ENCODE measurements at regions of chr15 and their contacts with region 1.

Region 1: GRCh38 chr15:57306161-57306943 is 70.0 kb upstream of the CGNL1 start:
- DNase-seq: peak; percentile 83 to 89 (median 86)
- ATAC-seq: peak; percentile 96
- H3K4me3 ChIP-seq: no peak overlapping the region
- H3K27ac ChIP-seq: peak overlapping the region; percentile 60; the same call in 2 of the 3 replicates
- H3K4me1 ChIP-seq: peaks cover 9 to 21% of the 10 kb centered on the region in 2 experiments
- H3K27me3 ChIP-seq: no peaks in the 10 kb centered on the region
- CTCF ChIP-seq: peak; percentile 78 to 89 (median 86)
- EP300 ChIP-seq: no peak
- POLR2A ChIP-seq: no peak
- RAD21 ChIP-seq: peak; percentile 82 to 89

Region 2: GRCh38 chr15:56491110-56491722 is 815.1 kb before region 1 on chr15:
- CTCF ChIA-PET with region 1: interaction called, 5 read pairs
- POLR2A ChIA-PET with region 1: no interaction called
- in situ Hi-C with region 1: loop called (anchors 25 kb)
- intact Hi-C with region 1: loop called (anchors 2 kb)
- DNase-seq: peak; percentile 52 to 74 (median 65)
- ATAC-seq: peak; percentile 95
- H3K4me3 ChIP-seq: no peak overlapping the region
- H3K27ac ChIP-seq: no peak overlapping the region
- H3K4me1 ChIP-seq: no peaks in the 10 kb centered on the region; a peak in 1 of 5 replicates
- H3K27me3 ChIP-seq: no peaks in the 10 kb centered on the region
- CTCF ChIP-seq: peak; percentile 81 to 90 (median 89)
- EP300 ChIP-seq: no peak
- POLR2A ChIP-seq: no peak
- RAD21 ChIP-seq: peak; percentile 73 to 87

Region 3: DNA sequence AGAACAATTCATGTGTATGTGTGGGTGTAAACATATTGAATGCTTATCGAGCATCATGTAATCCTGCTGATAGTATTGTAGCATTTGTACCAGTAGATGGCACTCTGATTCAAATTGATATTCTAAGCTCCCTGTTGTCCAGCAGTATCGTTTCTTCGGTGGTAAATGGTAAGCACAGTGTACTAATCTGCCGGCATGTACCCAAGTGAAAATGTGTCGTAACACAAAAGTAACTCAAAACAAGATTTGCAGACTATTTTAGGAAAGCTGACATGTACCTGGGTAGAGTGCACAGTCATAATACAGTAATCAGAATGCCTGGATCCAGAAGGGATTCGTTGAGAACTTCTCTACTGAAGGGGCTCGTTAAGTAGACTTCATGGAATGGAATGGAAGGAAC is 809.7 kb before region 1 on chr15:
- CTCF ChIA-PET with region 1: interaction called, 5 read pairs
- POLR2A ChIA-PET with region 1: no interaction called
- in situ Hi-C with region 1: loop called (anchors 25 kb)
- intact Hi-C with region 1: loop called (anchors 2 kb)
- DNase-seq: peak; percentile 46 to 69 (median 60)
- ATAC-seq: peak; percentile 96
- H3K4me3 ChIP-seq: no peak overlapping the region
- H3K27ac ChIP-seq: no peak overlapping the region
- H3K4me1 ChIP-seq: no peaks in the 10 kb centered on the region; a peak in 1 of 5 replicates
- H3K27me3 ChIP-seq: no peaks in the 10 kb centered on the region
- CTCF ChIP-seq: peak; percentile 51 to 80 (median 59); a peak in 5 of 6 replicates
- EP300 ChIP-seq: no peak
- POLR2A ChIP-seq: no peak
- RAD21 ChIP-seq: peak; percentile 82 to 94

Region 4: GRCh38 chr15:56918046-56918938 is 388.1 kb before region 1 on chr15 and contains the start of gene TCF12:
- CTCF ChIA-PET with region 1: no interaction called
- POLR2A ChIA-PET with region 1: no interaction called
- in situ Hi-C with region 1: loop called (anchors 10 kb)
- intact Hi-C with region 1: loop called (anchors 1 kb)
- DNase-seq: peak; percentile 93 to 96 (median 94)
- ATAC-seq: peak; percentile 92
- H3K4me3 ChIP-seq: peak within 1 kb of the TSS; percentile 88
- H3K27ac ChIP-seq: peak within 1 kb of the TSS; percentile 92
- H3K4me1 ChIP-seq: peaks cover 8 to 20% of the 10 kb centered on the region in 2 experiments; a peak in 4 of 5 replicates
- H3K27me3 ChIP-seq: no peaks in the 10 kb centered on the region
- CTCF ChIP-seq: peak; percentile 43 to 65 (median 51)
- EP300 ChIP-seq: peak; percentile 49; the same call in 1 of the 2 replicates
- POLR2A ChIP-seq: peak; percentile 82
- RAD21 ChIP-seq: peak; percentile 55 to 66
- polyA plus RNA-seq, gene TCF12: 10.5 to 12.9 TPM

Region 5: GRCh38 chr15:57017024-57017423 is 289.3 kb before region 1 on chr15:
- CTCF ChIA-PET with region 1: no interaction called
- POLR2A ChIA-PET with region 1: no interaction called
- in situ Hi-C with region 1: no loop called
- intact Hi-C with region 1: loop called (anchors 5 kb)
- DNase-seq: peak in 1 of 4 experiments; percentile 16
- ATAC-seq: peak; percentile 56; the same call in 1 of the 3 replicates
- H3K4me3 ChIP-seq: no peak overlapping the region
- H3K27ac ChIP-seq: no peak overlapping the region
- H3K4me1 ChIP-seq: peaks cover 0 to 3% of the 10 kb centered on the region in 2 experiments; a peak in 2 of 5 replicates
- H3K27me3 ChIP-seq: no peaks in the 10 kb centered on the region
- CTCF ChIP-seq: peak in 1 of 3 experiments; percentile 48; a peak in 2 of 6 replicates
- EP300 ChIP-seq: no peak
- POLR2A ChIP-seq: no peak
- RAD21 ChIP-seq: peak; percentile 28 to 45

Region 6: DNA sequence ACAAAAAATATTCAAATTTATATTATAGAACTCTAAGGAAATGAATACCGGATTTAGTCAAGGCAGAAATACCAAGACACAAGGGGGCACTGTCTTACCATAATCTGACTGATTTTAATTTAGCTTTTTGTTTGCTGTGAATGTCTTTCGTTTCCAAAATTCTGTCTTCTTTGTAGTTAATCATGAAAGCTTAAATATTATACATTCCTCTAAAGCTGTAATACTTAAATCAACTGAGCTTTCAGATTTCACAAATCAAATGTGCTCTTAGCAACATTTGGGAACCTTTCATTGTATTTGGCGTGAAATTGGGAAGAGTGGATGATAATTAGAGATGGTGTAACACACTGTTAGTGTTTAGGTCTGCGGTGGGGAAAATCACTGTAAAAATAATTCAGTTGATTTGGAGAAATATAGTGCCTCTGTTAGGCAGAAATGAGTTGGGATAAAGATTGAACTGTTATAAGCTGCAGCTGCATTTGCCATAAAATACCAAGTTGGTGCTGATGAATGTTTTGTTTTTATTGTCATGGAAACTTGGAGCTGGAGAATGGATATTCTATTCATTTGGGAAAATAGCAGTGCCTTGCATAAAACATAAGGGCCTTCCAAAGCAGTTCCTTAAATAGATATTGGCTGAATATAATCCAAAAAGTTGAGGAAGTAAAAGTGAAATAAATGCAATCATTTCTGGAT is 159.7 kb before region 1 on chr15:
- CTCF ChIA-PET with region 1: no interaction called
- POLR2A ChIA-PET with region 1: no interaction called
- in situ Hi-C with region 1: no loop called
- intact Hi-C with region 1: loop called (anchors 2 kb)
- DNase-seq: peak; percentile 10 to 53 (median 16)
- ATAC-seq: 0 out of 3 replicates have a peak, but pooled peaks have one; percentile 45
- H3K4me3 ChIP-seq: no peak overlapping the region
- H3K27ac ChIP-seq: no peak overlapping the region
- H3K4me1 ChIP-seq: peaks cover 4 to 16% of the 10 kb centered on the region in 2 experiments; a peak in 4 of 5 replicates
- H3K27me3 ChIP-seq: no peaks in the 10 kb centered on the region
- CTCF ChIP-seq: peak in 2 of 3 experiments; percentile 46 to 78; a peak in 4 of 6 replicates
- EP300 ChIP-seq: no peak
- POLR2A ChIP-seq: no peak
- RAD21 ChIP-seq: peak; percentile 48 to 74

Region 7: DNA sequence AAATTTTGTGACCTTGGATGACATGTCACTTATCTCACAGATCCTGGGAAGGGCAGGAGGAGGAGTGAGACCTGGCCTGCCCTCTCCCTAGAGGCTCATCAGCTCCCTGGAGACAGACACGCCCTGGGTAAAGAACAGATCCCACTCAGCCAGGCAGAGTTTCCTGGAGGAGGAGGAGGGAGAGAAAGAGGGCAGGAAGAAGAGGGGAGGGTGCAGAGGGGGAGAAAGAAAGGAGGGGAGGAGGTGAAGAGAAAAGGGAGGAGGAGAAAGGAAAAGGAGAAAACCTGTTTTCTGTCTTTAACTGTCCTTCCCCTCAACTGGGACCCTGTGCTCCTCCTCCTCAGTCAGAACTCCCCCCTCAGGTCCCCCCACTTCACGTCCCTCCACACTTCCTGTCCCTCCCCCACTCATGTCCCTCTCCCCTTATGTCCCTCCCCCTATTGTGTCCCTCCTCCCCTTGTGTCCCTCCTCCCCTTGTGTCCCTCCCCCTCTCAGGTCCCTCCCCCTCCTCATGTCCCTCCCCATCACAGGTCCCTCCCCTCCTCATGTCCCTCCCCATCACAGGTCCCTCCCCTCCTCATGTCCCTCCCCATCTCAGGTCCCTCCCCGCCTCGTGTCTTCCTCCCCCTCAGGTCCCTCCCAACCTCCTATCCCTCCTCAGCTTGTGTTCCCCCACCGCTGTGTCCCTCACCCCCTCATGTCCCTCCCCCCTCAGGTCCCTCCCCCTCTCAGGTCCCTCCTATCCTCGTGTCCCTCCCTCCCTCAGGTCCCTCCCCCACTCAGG is 17.6 kb after region 1 on chr15:
- CTCF ChIA-PET with region 1: no interaction called
- POLR2A ChIA-PET with region 1: interaction called, 10 read pairs
- in situ Hi-C with region 1: no loop called
- intact Hi-C with region 1: no loop called
- DNase-seq: peak; percentile 97 to 98 (median 98)
- ATAC-seq: peak; percentile 84
- H3K4me3 ChIP-seq: peak overlapping the region; percentile 28
- H3K27ac ChIP-seq: peak overlapping the region; percentile 99
- H3K4me1 ChIP-seq: peaks cover 56 to 68% of the 10 kb centered on the region in 2 experiments
- H3K27me3 ChIP-seq: no peaks in the 10 kb centered on the region
- CTCF ChIP-seq: no peak
- EP300 ChIP-seq: peak; percentile 46
- POLR2A ChIP-seq: peak; percentile 82
- RAD21 ChIP-seq: no peak

Region 8: DNA sequence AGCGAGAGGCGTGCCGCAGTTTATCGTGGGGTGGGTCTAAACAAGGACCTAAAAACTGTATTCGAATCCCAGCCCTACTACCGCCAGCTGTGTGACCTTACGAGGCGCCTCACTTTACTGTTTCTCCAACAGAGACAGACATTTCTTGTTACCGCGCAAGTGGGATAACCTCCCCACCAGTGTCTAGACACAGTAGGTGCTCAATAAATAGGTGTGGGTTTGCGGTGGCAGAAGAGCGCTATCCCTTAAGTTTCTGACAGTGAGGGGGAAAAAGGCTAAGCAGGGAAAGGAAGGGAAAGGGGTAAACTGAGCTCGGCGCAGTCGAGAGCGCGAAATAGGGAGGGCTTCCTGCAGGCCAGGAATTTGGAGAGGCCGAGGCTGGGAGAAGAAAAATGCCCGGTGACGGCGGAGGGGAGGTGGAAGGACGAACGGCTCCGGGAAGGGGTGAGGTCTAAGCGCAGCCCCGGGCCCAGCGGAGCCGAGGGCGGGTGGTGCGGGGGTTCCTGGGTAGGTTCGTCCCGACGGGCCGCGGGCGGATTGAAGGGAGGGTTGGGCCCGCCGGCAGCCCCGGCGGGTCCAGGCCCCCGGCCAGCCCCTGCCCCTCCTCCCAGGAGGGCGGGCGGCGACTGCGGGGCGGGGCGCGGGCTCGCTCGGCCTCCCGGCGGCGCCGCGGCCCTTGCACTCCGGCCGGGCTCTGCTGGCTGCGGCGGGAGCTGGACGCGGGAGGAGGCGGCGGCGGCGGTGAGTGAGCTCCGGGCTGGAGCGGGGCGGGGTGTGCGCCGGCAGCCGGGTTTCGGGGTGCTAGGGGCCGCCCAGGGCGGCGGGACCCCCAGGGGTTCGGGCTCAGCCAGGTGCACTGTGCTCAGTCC is 69.7 kb after region 1 on chr15 and contains the start of gene CGNL1:
- CTCF ChIA-PET with region 1: no interaction called
- POLR2A ChIA-PET with region 1: no interaction called
- in situ Hi-C with region 1: no loop called
- intact Hi-C with region 1: no loop called
- DNase-seq: peak in 3 of 4 experiments; percentile 40 to 59 (median 57)
- ATAC-seq: peak; percentile 86
- H3K4me3 ChIP-seq: no peak within 1 kb of the TSS
- H3K27ac ChIP-seq: no peak within 1 kb of the TSS
- H3K4me1 ChIP-seq: peaks cover 0 to 11% of the 10 kb centered on the region in 2 experiments; a peak in 2 of 5 replicates
- H3K27me3 ChIP-seq: peaks cover 47 to 78% of the 10 kb centered on the region in 2 experiments
- CTCF ChIP-seq: no peak
- EP300 ChIP-seq: no peak
- POLR2A ChIP-seq: no peak
- RAD21 ChIP-seq: no peak
- polyA plus RNA-seq, gene CGNL1: not detected